ENCODE measurements at regions of chr14 and their contacts with region 1.

Region 1: DNA sequence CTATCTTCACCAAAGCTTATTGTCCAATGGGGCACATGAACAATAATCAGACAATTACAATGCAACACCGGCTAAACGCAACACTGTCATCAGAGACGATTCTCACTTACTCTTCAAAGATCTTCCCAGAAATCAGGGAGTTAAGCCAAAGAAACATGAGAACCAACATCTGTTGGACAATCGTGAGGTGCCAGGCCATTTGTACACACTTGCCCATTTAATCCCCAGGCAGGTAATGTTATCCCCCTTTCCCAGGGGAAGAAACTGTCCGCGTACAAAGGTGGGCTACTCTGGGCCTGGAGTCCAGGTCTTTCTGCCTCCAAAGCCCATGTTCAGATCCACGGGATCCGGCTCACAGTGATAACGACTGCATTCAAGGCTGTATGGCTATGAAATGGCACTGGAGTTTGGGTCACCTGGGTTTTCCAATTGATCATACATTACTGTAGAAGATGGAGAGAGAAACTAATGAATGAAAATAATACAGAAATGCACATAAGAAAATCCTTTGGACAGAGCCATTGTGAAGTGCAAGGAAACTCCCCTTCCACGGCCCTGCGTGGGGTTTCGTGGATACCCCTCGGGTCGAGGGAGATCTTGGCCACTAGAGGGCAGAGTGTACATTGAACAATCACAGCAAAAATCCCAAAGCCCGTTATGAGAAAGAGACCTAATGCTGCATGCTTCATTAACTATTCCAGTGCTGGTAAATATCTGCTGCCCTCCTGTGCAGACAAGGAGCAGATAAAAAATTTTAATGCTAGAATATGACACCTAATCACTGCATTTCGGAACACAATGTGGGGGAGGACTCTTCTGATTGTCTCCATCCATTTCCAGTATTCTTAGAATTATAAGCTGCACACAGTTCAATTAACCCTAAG is 111.4 kb downstream of the EGLN3 start:
- DNase-seq: peak; percentile 50
- ATAC-seq: peak; percentile 85

Region 2: GRCh38 chr14:34098045-34098984 is 258.9 kb after region 1 on chr14:
- intact Hi-C with region 1: loop called (anchors 10 kb)
- DNase-seq: peak; percentile 39
- ATAC-seq: peak; percentile 66

Region 3: GRCh38 chr14:34319140-34319539 is 479.7 kb after region 1 on chr14:
- intact Hi-C with region 1: loop called (anchors 10 kb)
- DNase-seq: no peak
- ATAC-seq: no peak